Stomach (tissue), 19 donors: ENCODE measurements at regions of chr18 and their contacts with region 1.

Region 1: DNA sequence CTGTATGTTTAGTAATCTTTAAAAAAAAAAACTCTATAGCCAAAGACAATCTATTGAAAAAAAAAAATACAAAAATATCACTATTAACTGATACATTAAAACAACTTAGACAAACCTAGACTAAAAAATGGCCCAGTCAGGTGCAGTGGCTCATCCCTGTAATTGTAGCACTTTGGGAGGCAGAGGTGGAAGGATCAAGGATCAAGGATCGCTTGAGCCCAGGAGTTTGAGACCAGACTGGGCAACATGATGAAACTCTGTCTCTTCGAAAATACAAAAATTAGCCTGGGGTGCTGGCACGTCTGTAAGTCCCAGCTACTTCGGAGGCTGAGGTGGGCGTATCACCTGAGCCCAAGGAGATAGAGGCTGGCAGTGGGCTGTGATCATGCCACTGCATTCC is 16.1 kb downstream of the ESCO1 start:
- DNase-seq: no peak
- H3K4me3 ChIP-seq: no peak overlapping the region
- H3K27ac ChIP-seq: no peak overlapping the region
- H3K4me1 ChIP-seq: no peaks in the 10 kb centered on the region
- H3K27me3 ChIP-seq: no peaks in the 10 kb centered on the region
- CTCF ChIP-seq: no peak
- EP300 ChIP-seq: no peak
- POLR2A ChIP-seq: no peak

Region 2: DNA sequence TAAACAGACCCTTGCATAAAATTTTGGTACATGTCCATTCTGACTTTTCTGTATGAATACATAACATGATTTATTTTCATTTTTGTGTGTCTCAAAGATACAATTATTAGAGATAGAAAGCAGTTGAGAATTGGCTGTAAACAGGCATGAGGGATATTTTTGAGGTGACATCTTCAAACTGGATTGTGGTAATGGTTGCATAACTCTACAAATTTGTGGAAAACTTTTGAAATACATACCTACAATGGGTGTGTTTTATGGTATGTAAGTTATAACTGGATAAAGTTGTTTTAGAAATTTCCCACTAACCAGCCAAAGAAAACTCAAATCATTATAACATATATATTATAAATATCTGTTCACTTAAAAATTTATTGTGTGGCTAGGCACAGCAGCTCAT is 302.8 kb before region 1 on chr18:
- intact Hi-C with region 1: no loop called
- DNase-seq: no peak
- H3K4me3 ChIP-seq: no peak overlapping the region
- H3K27ac ChIP-seq: no peak overlapping the region
- H3K4me1 ChIP-seq: no peaks in the 10 kb centered on the region
- H3K27me3 ChIP-seq: no peaks in the 10 kb centered on the region
- CTCF ChIP-seq: no peak
- EP300 ChIP-seq: no peak
- POLR2A ChIP-seq: no peak

Region 3: GRCh38 chr18:21513292-21513691 is 71.1 kb before region 1 on chr18:
- intact Hi-C with region 1: loop called (anchors 10 kb)
- DNase-seq: no peak
- H3K4me3 ChIP-seq: no peak overlapping the region
- H3K27ac ChIP-seq: no peak overlapping the region
- H3K4me1 ChIP-seq: no peaks in the 10 kb centered on the region
- H3K27me3 ChIP-seq: no peaks in the 10 kb centered on the region
- CTCF ChIP-seq: no peak
- EP300 ChIP-seq: no peak
- POLR2A ChIP-seq: no peak

Region 4: DNA sequence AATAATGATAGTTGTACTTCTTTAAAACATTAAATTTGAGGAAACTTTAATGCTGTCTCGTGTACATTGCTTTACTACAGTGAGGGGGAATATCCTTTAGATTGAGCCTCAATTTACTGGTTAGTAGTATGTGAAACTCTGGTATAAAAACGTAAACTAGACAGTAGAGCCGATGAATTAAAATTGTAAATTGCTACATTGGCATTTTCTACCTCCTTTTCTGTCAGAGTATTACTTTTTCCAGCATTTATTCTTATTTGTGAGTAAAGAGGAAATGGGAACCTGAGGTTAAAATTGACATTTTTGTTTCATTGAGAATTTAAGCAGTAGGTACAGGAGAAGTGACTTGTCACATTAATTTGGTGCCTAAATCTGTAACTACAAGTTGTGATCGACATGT is 284.4 kb after region 1 on chr18:
- intact Hi-C with region 1: no loop called
- DNase-seq: no peak
- H3K4me3 ChIP-seq: no peak overlapping the region
- H3K27ac ChIP-seq: no peak overlapping the region
- H3K4me1 ChIP-seq: no peaks in the 10 kb centered on the region
- H3K27me3 ChIP-seq: no peaks in the 10 kb centered on the region
- CTCF ChIP-seq: no peak
- EP300 ChIP-seq: no peak
- POLR2A ChIP-seq: no peak